ENCODE measurements at regions of chr11 and their contacts with region 1.

Region 1: DNA sequence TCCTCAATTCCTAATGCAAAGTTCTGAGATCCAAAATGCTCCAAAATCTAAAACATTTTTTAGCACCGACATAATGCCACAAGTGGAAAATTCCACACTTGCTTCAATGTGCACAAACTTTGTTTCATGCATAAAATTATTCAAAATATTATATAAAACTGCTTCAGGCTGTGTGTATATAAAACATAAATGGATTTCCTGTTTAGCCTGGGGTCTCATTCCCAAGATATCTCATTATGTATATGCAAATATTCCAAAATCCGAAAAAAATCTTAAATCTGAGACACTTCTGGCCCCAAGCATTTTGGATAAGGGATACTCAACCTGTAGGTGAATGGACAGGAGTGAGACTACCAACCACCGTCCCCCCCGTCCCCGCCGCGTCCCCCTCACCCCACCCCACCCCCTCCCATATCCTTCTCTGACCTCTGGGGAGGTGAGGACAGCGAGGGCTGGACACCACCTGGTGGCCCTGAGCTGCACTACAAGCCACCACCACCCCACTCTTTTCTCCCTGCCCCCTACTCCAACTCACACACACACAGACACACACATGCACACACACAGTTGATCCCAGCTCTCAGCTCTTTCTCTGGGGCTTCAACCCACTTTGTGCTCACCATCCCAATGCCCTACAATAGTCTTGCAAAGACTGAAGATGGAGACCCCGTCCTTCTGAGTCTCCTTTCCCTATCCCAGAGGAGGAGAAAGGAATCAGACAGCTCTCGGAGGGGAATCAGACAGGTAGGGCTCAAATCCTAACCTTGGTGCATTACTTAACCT is 101.0 kb downstream of the PDE2A start:
- DNase-seq: peak; percentile 47 to 67
- ATAC-seq: peak; percentile 85 to 94
- H3K4me3 ChIP-seq: no peak overlapping the region
- H3K27ac ChIP-seq: no peak overlapping the region
- H3K4me1 ChIP-seq: peaks cover 3% of the 10 kb centered on the region; the same call in 1 of the 3 replicates
- CTCF ChIP-seq: peak; percentile 59
- EP300 ChIP-seq: no peak
- POLR2A ChIP-seq: no peak
- RAD21 ChIP-seq: peak; percentile 68 to 74

Region 2: GRCh38 chr11:72483412-72484186 is 89.7 kb before region 1 on chr11:
- CTCF ChIA-PET with region 1: interaction called, 11 read pairs
- POLR2A ChIA-PET with region 1: no interaction called
- DNase-seq: peak in 1 of 2 experiments; percentile 10
- ATAC-seq: no peak
- H3K4me3 ChIP-seq: no peak overlapping the region
- H3K27ac ChIP-seq: no peak overlapping the region
- H3K4me1 ChIP-seq: 0 out of 3 replicates have a peak, but pooled peaks cover 2% of the 10 kb centered on the region
- CTCF ChIP-seq: no peak
- EP300 ChIP-seq: no peak
- POLR2A ChIP-seq: no peak
- RAD21 ChIP-seq: no peak

Region 3: DNA sequence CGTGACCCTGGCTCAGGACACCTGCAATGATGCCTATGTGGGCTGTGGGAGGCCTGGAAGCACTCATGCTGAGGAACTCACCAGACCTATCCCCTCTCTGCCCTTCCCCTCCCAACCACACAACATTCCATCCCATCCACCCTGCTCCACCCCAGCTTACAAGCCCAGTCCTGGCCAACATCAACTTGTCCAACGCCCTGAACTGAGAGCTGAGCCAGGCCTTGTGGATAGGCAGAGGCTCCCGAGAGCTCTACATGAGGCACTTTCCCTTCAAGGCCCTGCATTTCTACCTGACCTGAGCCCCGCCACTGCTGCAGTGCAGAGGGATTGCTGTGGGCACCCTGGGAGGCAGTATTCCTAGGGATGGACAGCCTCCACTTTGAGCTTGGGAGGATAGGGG is 11.4 kb before region 1 on chr11:
- CTCF ChIA-PET with region 1: interaction called, 12 read pairs
- POLR2A ChIA-PET with region 1: no interaction called
- DNase-seq: no peak
- ATAC-seq: peak in 1 of 2 experiments; percentile 22; a peak in 2 of 6 replicates
- H3K4me3 ChIP-seq: no peak overlapping the region
- H3K27ac ChIP-seq: no peak overlapping the region
- H3K4me1 ChIP-seq: no peaks in the 10 kb centered on the region
- CTCF ChIP-seq: no peak
- EP300 ChIP-seq: no peak
- POLR2A ChIP-seq: no peak
- RAD21 ChIP-seq: no peak

Region 4: DNA sequence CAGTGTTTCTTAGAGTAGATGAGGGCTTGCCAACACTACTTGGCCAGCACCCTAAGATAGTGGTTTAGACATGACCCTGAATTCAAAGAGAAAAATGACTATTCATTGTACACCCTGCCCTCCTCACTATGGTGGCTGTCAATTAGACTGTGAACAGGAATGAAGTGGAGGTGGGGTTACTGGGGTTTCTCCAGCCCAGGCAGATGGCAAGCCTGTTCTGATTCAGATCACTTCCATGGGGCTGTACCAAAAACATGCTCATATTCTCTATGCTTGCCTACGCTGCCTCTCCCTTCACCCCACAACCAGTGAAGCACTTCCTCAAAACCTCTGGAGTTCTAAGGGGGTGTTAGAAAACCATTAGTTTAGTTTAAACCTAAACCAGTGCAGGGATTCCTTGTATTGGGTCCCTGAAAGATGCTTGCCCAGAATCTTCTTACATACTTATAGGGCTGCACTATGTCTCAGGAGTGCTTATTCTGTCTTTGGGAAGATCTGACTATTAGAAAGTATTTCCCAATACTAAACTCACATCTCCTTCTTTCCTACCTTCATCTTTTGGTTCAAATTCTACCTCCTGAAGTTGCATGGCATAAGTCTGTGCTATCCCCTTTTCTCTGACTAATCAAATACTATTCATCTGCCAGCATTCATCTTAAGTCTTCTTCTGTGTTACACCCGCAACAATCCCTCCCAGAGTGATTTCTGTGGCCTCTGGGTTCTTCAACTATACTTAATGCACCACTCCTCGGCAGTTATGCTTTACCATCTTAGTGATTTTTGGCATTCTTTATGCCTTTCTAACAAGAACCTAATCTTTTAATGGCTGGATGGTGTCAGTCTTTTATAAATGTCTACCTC is 312.7 kb after region 1 on chr11:
- CTCF ChIA-PET with region 1: no interaction called
- POLR2A ChIA-PET with region 1: no interaction called
- DNase-seq: no peak
- ATAC-seq: no peak
- H3K4me3 ChIP-seq: no peak overlapping the region
- H3K27ac ChIP-seq: no peak overlapping the region
- H3K4me1 ChIP-seq: no peaks in the 10 kb centered on the region
- CTCF ChIP-seq: no peak
- EP300 ChIP-seq: no peak
- POLR2A ChIP-seq: no peak
- RAD21 ChIP-seq: no peak